MCF 10A (cell line): ENCODE measurements at regions of chr4 and their contacts with region 1.

Region 1: DNA sequence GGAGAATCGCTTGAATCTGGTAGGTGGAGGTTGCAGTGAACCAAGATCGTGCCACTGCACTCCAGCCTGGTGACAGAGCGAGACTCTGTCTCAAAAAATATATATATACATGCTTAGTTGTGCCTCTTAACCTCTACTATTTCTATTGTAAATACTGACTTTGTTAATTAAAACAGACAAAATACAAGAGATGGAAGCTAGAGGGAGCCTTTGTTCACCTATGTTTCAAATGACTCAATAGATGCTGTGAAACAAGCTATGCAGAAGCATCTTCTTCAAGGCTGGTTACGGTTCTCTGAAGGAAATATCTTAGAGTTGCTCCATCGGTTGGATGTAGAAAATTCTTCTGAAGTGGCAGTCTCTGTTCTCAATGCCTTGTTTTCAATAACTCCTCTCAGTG is 6.2 kb downstream of the NCAPG start:
- DNase-seq: peak; percentile 56
- H3K4me3 Mint-ChIP-seq: peak overlapping the region; percentile 24
- H3K27ac Mint-ChIP-seq: no peak overlapping the region
- H3K4me1 Mint-ChIP-seq: peaks cover 13% of the 10 kb centered on the region
- H3K27me3 Mint-ChIP-seq: no peaks in the 10 kb centered on the region
- CTCF ChIP-seq: peak; percentile 52

Region 2: GRCh38 chr4:18021722-18022571 is 204.9 kb after region 1 on chr4 and contains the start of gene LCORL:
- CTCF ChIA-PET with region 1: interaction called, 8 read pairs
- POLR2A ChIA-PET with region 1: interaction called, 9 read pairs
- intact Hi-C with region 1: loop called (anchors 2 kb)
- DNase-seq: peak; percentile 97
- H3K4me3 Mint-ChIP-seq: peak within 1 kb of the TSS; percentile 98
- H3K27ac Mint-ChIP-seq: peak within 1 kb of the TSS; percentile 84
- H3K4me1 Mint-ChIP-seq: peaks cover 14% of the 10 kb centered on the region
- H3K27me3 Mint-ChIP-seq: no peaks in the 10 kb centered on the region
- CTCF ChIP-seq: no peak
- total RNA-seq, gene LCORL: 10.7 and 14.1 TPM in 2 replicates

Region 3: DNA sequence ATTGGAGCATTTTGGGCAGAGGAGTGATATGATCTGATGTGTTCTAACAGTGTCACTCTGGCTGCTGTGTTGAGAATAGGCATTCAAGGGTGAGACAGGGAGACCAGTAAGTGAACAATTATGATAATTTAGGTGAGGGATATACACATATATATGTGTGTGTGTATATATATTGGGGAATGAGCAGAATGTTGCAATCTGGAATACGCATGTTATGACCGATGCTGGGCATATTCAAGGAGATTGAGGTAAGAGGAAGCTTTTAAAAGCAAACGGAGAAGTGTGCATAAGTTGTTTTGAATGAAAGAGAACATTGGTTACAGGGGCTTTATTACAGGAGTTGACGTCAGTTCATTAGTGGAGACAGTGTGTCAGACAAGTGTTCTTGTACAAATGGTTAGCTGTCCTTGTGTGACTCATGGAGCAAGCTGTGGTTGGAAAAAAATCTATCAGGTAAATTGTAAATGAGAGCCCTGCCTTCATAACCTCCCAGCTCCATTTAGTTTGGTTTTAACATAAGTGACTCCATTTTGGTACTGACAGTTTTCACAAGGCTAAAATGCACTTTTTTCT is 647.1 kb after region 1 on chr4:
- CTCF ChIA-PET with region 1: no interaction called
- POLR2A ChIA-PET with region 1: no interaction called
- intact Hi-C with region 1: no loop called
- DNase-seq: peak; percentile 28
- H3K4me3 Mint-ChIP-seq: no peak overlapping the region
- H3K27ac Mint-ChIP-seq: no peak overlapping the region
- H3K4me1 Mint-ChIP-seq: peaks cover 14% of the 10 kb centered on the region
- H3K27me3 Mint-ChIP-seq: no peaks in the 10 kb centered on the region
- CTCF ChIP-seq: no peak

Region 4: DNA sequence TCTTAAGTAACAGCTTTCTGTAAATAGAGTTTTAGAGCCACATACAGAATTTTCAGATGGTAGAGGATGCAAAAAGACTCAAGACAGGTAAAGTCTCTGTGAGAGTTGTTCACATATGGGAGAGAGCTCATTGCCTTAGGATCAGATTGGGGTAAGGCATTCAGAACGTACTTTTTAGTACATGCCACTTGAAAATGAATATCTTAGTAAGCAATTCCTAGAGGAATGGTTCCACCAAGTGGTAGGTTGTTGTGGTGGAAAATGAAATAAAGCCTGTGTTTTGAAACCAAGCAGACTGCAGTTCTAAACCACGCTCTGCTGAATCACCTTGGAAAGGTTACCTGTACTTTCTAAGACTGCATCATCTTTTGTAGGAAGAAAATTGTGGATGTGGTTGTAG is 751.6 kb after region 1 on chr4:
- CTCF ChIA-PET with region 1: interaction called, 40 read pairs
- POLR2A ChIA-PET with region 1: interaction called, 5 read pairs
- intact Hi-C with region 1: no loop called
- DNase-seq: no peak
- H3K4me3 Mint-ChIP-seq: no peak overlapping the region
- H3K27ac Mint-ChIP-seq: no peak overlapping the region
- H3K4me1 Mint-ChIP-seq: peaks cover 7% of the 10 kb centered on the region
- H3K27me3 Mint-ChIP-seq: no peaks in the 10 kb centered on the region
- CTCF ChIP-seq: peak; percentile 23